ENCODE measurements at regions of chr2 and their contacts with region 1.

Region 1: DNA sequence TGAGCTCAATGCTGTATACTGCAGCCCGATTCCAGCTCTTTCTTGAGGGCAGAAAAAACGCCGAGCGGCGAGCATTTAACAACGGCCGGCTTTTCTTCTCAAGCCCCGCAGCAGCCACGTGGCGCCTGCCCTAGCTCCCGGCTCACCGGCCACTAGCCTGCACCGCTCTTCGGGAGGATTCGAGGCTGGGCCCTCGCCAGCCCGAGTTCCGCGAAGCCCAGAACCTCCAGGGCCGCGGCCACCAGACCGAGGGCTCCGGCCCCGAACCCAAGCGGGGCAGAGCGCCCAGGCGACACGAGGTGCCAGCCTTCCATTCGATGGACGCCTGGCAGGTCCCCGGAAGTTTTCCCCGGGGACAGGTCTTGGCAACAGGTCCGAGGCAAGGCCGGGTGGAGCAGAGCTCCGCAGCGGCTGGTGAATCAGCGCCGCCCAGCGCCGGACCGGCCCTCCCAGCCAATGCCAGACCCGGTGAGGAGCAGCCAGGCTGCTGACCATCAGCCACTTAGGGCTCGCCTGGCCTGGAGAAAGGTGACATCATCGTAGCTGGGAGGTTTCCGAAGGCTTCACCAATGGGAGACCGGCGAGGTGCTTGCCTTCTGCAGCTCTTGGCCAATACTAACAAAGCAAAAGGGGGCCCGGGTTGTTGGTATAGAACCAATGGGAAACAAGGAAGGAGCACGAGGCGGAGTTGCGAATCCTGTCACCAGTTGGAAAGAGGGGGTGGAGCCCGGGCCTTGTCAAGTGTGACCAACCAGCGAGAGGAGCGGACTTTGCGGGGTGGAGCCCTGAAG is 544 bp upstream of the MXD1 start:
- DNase-seq: peak; percentile 100
- ATAC-seq: peak; percentile 92
- H3K4me3 ChIP-seq: peak overlapping the region; percentile 50
- H3K27ac ChIP-seq: peak overlapping the region; percentile 69
- H3K4me1 ChIP-seq: no peaks in the 10 kb centered on the region; the same call in 1 of the 2 replicates
- H3K27me3 ChIP-seq: no peaks in the 10 kb centered on the region
- CTCF ChIP-seq: no peak; the same call in 1 of the 2 replicates
- POLR2A ChIP-seq: peak; percentile 63
- RAD21 ChIP-seq: no peak; the same call in 1 of the 2 replicates

Region 2: DNA sequence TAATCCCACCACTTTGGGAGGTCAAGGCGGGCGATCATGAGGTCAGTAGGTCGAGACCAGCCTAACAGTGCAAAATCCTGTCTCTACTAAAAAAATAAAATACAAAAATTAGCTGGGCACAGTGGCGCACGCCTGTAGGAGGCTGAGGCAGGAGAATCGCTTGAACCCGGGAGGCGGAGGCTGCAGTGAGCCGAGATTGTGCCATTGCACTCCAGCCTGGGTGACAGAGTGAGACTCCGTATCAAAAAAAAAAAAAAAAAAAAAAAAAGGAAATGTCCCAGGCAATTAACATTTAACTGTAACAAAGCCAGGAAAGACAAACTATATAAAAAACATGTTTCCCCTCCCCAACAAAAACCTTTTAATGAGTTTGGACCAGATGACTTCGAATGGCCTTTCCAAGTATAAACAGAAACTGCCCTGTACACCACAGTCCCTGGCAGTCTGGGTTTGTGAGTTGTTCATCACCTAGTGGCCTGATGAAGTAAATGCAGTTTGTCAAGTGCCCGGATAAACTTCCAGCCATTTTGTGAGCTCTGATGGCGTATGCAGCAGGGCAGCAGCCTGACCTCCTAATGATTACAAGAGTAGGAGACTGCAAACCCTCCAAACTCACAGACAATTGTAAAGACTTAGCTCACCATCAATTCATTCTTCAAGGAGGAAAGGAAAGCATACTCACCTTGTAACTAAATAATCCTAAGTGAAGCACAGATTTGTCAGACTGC is 156.3 kb after region 1 on chr2:
- CTCF ChIA-PET with region 1: interaction called, 8 read pairs
- POLR2A ChIA-PET with region 1: interaction called, 5 read pairs
- dilution Hi-C with region 1: no loop called
- in situ Hi-C with region 1: loop called (anchors 5 kb)
- intact Hi-C with region 1: loop called (anchors 1 kb)
- DNase-seq: peak; percentile 90
- ATAC-seq: peak; percentile 98
- H3K4me3 ChIP-seq: no peak overlapping the region
- H3K27ac ChIP-seq: peak overlapping the region; percentile 83; the same call in 1 of the 2 replicates
- H3K4me1 ChIP-seq: peaks cover 6% of the 10 kb centered on the region
- H3K27me3 ChIP-seq: no peaks in the 10 kb centered on the region
- CTCF ChIP-seq: peak; percentile 90
- POLR2A ChIP-seq: no peak
- RAD21 ChIP-seq: peak; percentile 91

Region 3: GRCh38 chr2:70142590-70143313 is 228.4 kb after region 1 on chr2:
- CTCF ChIA-PET with region 1: interaction called, 7 read pairs
- POLR2A ChIA-PET with region 1: interaction called, 6 read pairs
- dilution Hi-C with region 1: no loop called
- in situ Hi-C with region 1: loop called (anchors 5 kb)
- intact Hi-C with region 1: loop called (anchors 1 kb)
- DNase-seq: peak; percentile 99
- ATAC-seq: peak; percentile 88
- H3K4me3 ChIP-seq: peak overlapping the region; percentile 21; the same call in 1 of the 2 replicates
- H3K27ac ChIP-seq: peak overlapping the region; percentile 77
- H3K4me1 ChIP-seq: peaks cover 12% of the 10 kb centered on the region
- H3K27me3 ChIP-seq: no peaks in the 10 kb centered on the region
- CTCF ChIP-seq: peak; percentile 99
- POLR2A ChIP-seq: peak; percentile 94
- RAD21 ChIP-seq: peak; percentile 99

Region 4: DNA sequence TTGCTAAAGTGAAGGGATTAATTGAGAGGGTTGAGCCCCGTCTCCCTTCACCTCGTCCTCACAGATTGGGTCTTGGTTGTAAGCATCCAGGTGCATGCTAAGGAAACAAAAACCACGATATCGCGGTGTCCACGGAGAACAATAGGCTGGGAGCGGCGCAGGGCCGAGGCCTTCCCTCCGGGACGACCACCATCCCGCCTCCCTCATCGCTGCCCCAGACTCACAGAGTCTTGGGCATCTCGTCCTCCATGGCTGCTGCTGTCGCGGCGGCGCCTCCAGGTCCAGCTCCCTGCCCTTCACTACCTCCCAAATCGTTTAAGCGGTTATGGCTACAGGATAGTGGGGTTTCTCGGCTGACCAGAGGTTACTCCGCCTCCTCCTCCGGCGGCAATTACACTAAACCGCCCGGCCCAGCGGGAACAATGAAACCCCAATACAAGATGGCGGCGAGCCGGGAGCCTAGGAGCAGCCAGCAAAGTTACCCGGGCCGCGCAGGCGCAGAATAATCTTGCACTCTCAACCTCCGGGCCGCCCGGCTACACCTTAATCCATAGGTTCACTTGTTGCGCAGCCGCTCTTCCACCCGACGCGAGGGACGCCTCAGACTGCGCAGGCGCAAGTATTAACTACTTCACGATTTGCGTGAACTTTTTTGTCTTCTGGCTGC is 333.9 kb after region 1 on chr2 and contains the start of gene TIA1:
- CTCF ChIA-PET with region 1: no interaction called
- POLR2A ChIA-PET with region 1: no interaction called
- dilution Hi-C with region 1: no loop called
- in situ Hi-C with region 1: loop called (anchors 25 kb)
- intact Hi-C with region 1: no loop called
- DNase-seq: peak; percentile 97
- ATAC-seq: peak; percentile 98
- H3K4me3 ChIP-seq: peak within 1 kb of the TSS; percentile 84
- H3K27ac ChIP-seq: peak within 1 kb of the TSS; percentile 96
- H3K4me1 ChIP-seq: peaks cover 2% of the 10 kb centered on the region; the same call in 1 of the 2 replicates
- H3K27me3 ChIP-seq: no peaks in the 10 kb centered on the region
- CTCF ChIP-seq: no peak
- POLR2A ChIP-seq: peak; percentile 95
- RAD21 ChIP-seq: no peak
- total RNA-seq, gene TIA1: 93.3 and 103 TPM in 2 replicates

Measured in IMR-90 (cell line).